ENCODE measurements at regions of chr2 and their contacts with region 1.

Region 1: GRCh38 chr2:47484396-47484795 is 81.4 kb downstream of the MSH2 start:
- DNase-seq: no peak
- ATAC-seq: no peak
- H3K4me3 ChIP-seq: no peak overlapping the region
- H3K4me3 Mint-ChIP-seq: no peak overlapping the region
- H3K27ac ChIP-seq: no peak overlapping the region
- H3K27ac Mint-ChIP-seq: no peak overlapping the region
- H3K4me1 ChIP-seq: peaks cover 10% of the 10 kb centered on the region in 2 donors
- H3K4me1 Mint-ChIP-seq: peaks cover 10% of the 10 kb centered on the region
- H3K27me3 ChIP-seq: no peaks in the 10 kb centered on the region
- H3K27me3 Mint-ChIP-seq: no peaks in the 10 kb centered on the region
- CTCF ChIP-seq: no peak

Region 2: GRCh38 chr2:46163610-46164554 is 1320.5 kb before region 1 on chr2:
- CTCF ChIA-PET with region 1: no interaction called
- POLR2A ChIA-PET with region 1: no interaction called
- intact Hi-C with region 1: no loop called
- DNase-seq: no peak
- ATAC-seq: no peak
- H3K4me3 ChIP-seq: no peak overlapping the region
- H3K4me3 Mint-ChIP-seq: no peak overlapping the region
- H3K27ac ChIP-seq: no peak overlapping the region
- H3K27ac Mint-ChIP-seq: no peak overlapping the region
- H3K4me1 ChIP-seq: no peaks in the 10 kb centered on the region
- H3K4me1 Mint-ChIP-seq: no peaks in the 10 kb centered on the region
- H3K27me3 ChIP-seq: no peaks in the 10 kb centered on the region
- H3K27me3 Mint-ChIP-seq: no peaks in the 10 kb centered on the region
- CTCF ChIP-seq: no peak

Region 3: GRCh38 chr2:47334356-47335136 is 149.8 kb before region 1 on chr2:
- CTCF ChIA-PET with region 1: no interaction called
- POLR2A ChIA-PET with region 1: interaction called, 10 read pairs
- intact Hi-C with region 1: no loop called
- DNase-seq: no peak
- ATAC-seq: no peak
- H3K4me3 ChIP-seq: no peak overlapping the region
- H3K4me3 Mint-ChIP-seq: no peak overlapping the region
- H3K27ac ChIP-seq: no peak overlapping the region
- H3K27ac Mint-ChIP-seq: no peak overlapping the region
- H3K4me1 ChIP-seq: peaks cover 17 to 23% of the 10 kb centered on the region in 2 donors
- H3K4me1 Mint-ChIP-seq: peaks cover 24% of the 10 kb centered on the region
- H3K27me3 ChIP-seq: no peaks in the 10 kb centered on the region
- H3K27me3 Mint-ChIP-seq: no peaks in the 10 kb centered on the region
- CTCF ChIP-seq: no peak

Region 4: DNA sequence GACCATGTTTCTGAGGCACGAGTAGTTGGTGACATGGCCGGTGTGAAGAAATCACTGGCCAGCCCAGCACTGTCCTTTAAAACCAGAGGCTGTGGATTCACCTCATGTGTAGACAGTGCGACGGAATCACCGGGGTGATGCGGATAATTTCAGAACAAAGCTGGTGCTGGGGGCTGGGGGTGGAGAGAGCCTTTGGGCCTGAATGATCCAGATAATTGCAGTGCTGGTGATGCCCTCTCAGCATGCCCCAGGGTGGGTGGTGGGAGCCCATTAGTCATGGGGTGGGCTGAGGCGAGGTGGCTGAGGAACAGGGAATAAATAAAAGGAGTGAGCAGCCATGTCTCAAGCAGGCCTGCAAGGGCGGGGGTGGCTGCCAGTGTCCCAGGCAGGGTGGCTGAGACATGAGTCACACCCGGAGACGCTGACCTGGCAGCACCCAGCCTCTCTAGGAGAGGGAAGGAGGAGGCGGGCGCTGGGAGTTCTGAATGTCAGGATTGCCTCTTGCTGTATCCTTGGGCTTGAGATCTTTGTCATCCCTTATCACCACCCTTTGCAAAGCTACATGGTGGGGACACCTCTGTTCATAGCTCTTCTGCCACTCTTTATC is 147.5 kb after region 1 on chr2:
- CTCF ChIA-PET with region 1: no interaction called
- POLR2A ChIA-PET with region 1: no interaction called
- intact Hi-C with region 1: no loop called
- DNase-seq: no peak
- ATAC-seq: no peak
- H3K4me3 ChIP-seq: no peak overlapping the region
- H3K4me3 Mint-ChIP-seq: no peak overlapping the region
- H3K27ac ChIP-seq: no peak overlapping the region
- H3K27ac Mint-ChIP-seq: no peak overlapping the region
- H3K4me1 ChIP-seq: peaks cover 0 to 4% of the 10 kb centered on the region in 2 donors
- H3K4me1 Mint-ChIP-seq: peaks cover 5% of the 10 kb centered on the region
- H3K27me3 ChIP-seq: no peaks in the 10 kb centered on the region
- H3K27me3 Mint-ChIP-seq: no peaks in the 10 kb centered on the region
- CTCF ChIP-seq: no peak

Region 5: DNA sequence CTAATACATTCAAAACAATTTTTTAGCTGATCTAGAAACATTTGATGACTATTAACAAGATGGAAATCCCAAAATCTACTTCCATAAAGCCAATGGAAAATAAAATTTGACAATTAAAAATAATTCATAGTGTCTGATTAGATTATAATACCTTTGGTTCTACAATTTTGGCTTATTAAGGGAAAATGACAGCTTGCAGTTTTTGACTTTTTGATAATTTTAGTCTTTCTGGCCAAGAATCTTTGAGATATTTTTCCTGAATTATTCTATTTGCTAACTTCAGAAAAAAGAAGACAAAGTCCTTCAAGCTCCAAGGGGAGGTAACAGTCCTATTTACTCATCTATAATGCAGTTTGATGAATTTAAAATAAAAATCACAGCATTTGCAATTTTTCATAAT is 338.1 kb after region 1 on chr2:
- CTCF ChIA-PET with region 1: no interaction called
- POLR2A ChIA-PET with region 1: no interaction called
- intact Hi-C with region 1: no loop called
- DNase-seq: no peak
- ATAC-seq: no peak
- H3K4me3 ChIP-seq: no peak overlapping the region
- H3K4me3 Mint-ChIP-seq: no peak overlapping the region
- H3K27ac ChIP-seq: peak overlapping the region in 1 of 2 donors; percentile 19
- H3K27ac Mint-ChIP-seq: no peak overlapping the region
- H3K4me1 ChIP-seq: no peaks in the 10 kb centered on the region
- H3K4me1 Mint-ChIP-seq: no peaks in the 10 kb centered on the region
- H3K27me3 ChIP-seq: no peaks in the 10 kb centered on the region
- H3K27me3 Mint-ChIP-seq: no peaks in the 10 kb centered on the region
- CTCF ChIP-seq: no peak